ENCODE measurements at regions of chr5 and their contacts with region 1.

Region 1: GRCh38 chr5:148443998-148444397 is 60.2 kb downstream of the FBXO38 start:
- DNase-seq: peak; percentile 39 to 65
- H3K4me3 ChIP-seq: no peak overlapping the region
- H3K27ac ChIP-seq: no peak overlapping the region
- H3K4me1 ChIP-seq: no peaks in the 10 kb centered on the region
- H3K27me3 ChIP-seq: no peaks in the 10 kb centered on the region
- CTCF ChIP-seq: peak; percentile 89

Region 2: GRCh38 chr5:148179234-148179824 is 264.7 kb before region 1 on chr5:
- CTCF ChIA-PET with region 1: no interaction called
- POLR2A ChIA-PET with region 1: no interaction called
- intact Hi-C with region 1: loop called (anchors 2 kb)
- DNase-seq: peak; percentile 6 to 63
- H3K4me3 ChIP-seq: no peak overlapping the region
- H3K27ac ChIP-seq: no peak overlapping the region
- H3K4me1 ChIP-seq: no peaks in the 10 kb centered on the region
- H3K27me3 ChIP-seq: no peaks in the 10 kb centered on the region
- CTCF ChIP-seq: peak; percentile 84

Region 3: GRCh38 chr5:148482691-148483462 is 38.9 kb after region 1 on chr5:
- CTCF ChIA-PET with region 1: no interaction called
- POLR2A ChIA-PET with region 1: no interaction called
- intact Hi-C with region 1: loop called (anchors 1 kb)
- DNase-seq: peak in 1 of 2 experiments; percentile 46
- H3K4me3 ChIP-seq: no peak overlapping the region
- H3K27ac ChIP-seq: no peak overlapping the region
- H3K4me1 ChIP-seq: no peaks in the 10 kb centered on the region
- H3K27me3 ChIP-seq: no peaks in the 10 kb centered on the region
- CTCF ChIP-seq: peak; percentile 44; the same call in 1 of the 2 replicates

Region 4: DNA sequence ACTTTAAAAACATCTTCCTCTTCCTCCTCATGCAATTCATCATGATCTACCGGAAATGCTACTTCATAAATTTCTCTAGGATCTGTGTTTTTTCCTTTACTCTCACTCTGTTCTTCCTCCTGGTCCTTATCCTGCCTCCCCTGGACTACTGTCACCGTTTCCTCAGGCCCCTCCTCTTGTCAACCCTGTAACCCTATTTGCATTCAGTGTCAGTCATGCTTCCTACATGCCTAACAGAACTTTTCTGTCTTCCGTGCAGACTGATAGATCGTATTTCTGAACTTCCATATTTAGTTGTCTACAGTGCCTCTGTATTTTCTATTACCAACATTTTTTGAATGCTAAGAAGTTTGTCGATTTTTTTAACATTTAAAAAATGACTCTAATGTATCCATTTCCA is 183.0 kb after region 1 on chr5:
- CTCF ChIA-PET with region 1: no interaction called
- POLR2A ChIA-PET with region 1: no interaction called
- intact Hi-C with region 1: loop called (anchors 5 kb)
- DNase-seq: no peak
- H3K4me3 ChIP-seq: no peak overlapping the region
- H3K27ac ChIP-seq: no peak overlapping the region
- H3K4me1 ChIP-seq: peaks cover 42% of the 10 kb centered on the region
- H3K27me3 ChIP-seq: no peaks in the 10 kb centered on the region
- CTCF ChIP-seq: no peak

Region 5: DNA sequence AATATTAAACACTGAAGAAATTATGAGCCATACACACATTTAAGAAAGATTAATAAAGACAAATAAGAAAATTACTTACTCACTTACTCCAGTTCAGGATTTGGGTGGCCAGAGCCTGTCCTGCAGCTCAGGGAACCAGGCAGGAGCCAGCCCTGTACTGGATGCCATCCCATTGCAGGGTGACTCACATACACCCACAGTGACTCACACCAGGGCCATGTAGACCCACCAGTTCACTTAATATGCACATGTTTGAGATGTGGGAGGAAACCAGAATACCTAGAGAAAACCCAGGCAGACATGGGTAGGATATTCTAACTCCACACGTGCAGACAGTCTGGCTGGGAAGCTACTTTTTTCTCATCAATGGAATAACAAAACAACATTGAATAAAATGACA is 332.8 kb after region 1 on chr5:
- CTCF ChIA-PET with region 1: no interaction called
- POLR2A ChIA-PET with region 1: no interaction called
- intact Hi-C with region 1: no loop called
- DNase-seq: peak; percentile 86 to 93
- H3K4me3 ChIP-seq: no peak overlapping the region
- H3K27ac ChIP-seq: peak overlapping the region; percentile 78
- H3K4me1 ChIP-seq: peaks cover 19% of the 10 kb centered on the region
- H3K27me3 ChIP-seq: no peaks in the 10 kb centered on the region
- CTCF ChIP-seq: no peak

Region 6: DNA sequence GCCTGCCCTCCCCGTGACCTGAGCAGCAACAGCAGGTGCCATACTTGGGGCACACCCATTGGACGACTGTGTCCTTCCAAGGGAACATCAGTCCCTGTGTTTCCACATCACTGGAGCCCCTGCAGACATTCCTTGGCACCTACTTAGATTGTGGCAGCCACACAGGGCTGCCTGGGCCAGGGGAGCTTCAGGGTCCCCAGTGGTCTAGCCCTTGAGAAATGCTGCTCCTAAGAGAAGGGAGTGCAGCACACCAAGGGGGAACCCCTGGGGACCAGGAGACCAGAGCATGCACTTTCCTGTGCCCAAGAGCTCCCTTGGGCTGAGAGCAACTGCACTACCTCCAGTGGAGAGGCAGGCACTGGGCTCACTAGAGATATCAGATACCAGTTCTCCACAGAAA is 677.1 kb after region 1 on chr5:
- CTCF ChIA-PET with region 1: no interaction called
- POLR2A ChIA-PET with region 1: no interaction called
- intact Hi-C with region 1: no loop called
- DNase-seq: no peak
- H3K4me3 ChIP-seq: no peak overlapping the region
- H3K27ac ChIP-seq: no peak overlapping the region
- H3K4me1 ChIP-seq: peaks cover 68% of the 10 kb centered on the region
- H3K27me3 ChIP-seq: no peaks in the 10 kb centered on the region
- CTCF ChIP-seq: no peak

Region 7: DNA sequence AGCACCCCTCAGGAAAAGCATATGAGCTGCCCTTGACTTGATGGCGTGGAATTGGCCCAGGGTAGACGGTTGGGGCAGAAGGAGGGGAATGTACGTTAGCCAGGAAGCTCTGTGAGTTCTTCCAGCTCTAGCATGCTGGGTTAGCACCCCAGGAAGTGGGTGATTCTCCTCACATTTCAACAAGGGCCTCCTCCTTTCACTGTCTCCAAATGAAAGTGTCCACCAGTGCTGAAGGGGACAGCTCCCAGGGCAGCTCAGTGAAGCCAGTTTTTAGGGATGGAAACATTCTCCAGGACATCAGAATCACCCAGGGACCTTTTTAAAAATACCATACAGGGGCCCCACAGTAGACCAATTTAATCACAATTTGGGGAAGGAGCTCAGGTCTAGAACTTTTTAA is 810.5 kb after region 1 on chr5:
- CTCF ChIA-PET with region 1: no interaction called
- POLR2A ChIA-PET with region 1: no interaction called
- intact Hi-C with region 1: no loop called
- DNase-seq: no peak
- H3K4me3 ChIP-seq: no peak overlapping the region
- H3K27ac ChIP-seq: no peak overlapping the region
- H3K4me1 ChIP-seq: no peaks in the 10 kb centered on the region
- H3K27me3 ChIP-seq: no peaks in the 10 kb centered on the region
- CTCF ChIP-seq: no peak